ENCODE measurements at regions of chr12 and their contacts with region 1.

Region 1: DNA sequence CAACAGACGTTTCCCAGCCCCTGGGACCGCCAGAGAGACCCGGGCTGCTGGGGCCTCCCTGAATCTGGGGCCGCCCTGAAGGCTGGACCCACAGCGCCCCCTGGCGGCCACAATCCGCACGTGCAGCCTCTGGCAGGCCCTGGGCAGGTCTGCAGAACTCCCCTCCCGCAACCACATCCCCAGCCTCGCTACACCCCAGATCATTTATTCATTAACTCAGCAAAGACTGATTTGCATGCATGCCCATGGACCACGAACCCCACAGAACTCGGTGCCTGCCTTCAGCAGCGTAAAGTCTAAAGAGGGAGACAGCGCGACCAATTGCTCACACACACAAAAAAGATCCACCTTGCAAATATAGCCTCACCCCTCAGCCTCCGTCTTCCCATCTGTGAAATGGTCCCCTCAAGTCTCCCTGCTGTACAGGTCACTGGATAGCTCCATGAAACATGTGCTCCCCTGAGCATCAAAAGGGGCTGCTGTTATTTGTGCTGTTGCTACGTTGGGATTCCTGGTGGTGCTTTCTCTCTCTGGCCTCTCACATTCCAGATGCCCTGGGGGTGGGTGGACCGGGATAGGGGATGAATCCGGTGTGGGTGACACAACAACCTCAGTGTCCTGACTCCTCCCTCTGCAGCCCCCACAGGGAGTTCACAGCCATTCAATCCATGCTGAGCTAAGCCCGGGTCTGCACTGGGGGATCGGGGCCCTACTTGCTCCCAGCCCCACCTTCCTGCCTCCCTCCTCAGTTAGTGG is 96.4 kb downstream of the SCARB1 start:
- DNase-seq: peak; percentile 75 to 93 (median 88)
- ATAC-seq: peak; percentile 92
- H3K4me3 ChIP-seq: no peak overlapping the region
- H3K27ac ChIP-seq: no peak overlapping the region
- H3K4me1 ChIP-seq: peaks cover 0 to 12% of the 10 kb centered on the region in 2 experiments; a peak in 2 of 5 replicates
- H3K27me3 ChIP-seq: peaks cover 0 to 15% of the 10 kb centered on the region in 2 experiments; a peak in 2 of 5 replicates
- CTCF ChIP-seq: peak; percentile 88 to 94 (median 91)
- EP300 ChIP-seq: no peak
- POLR2A ChIP-seq: no peak
- RAD21 ChIP-seq: peak; percentile 81 to 96

Region 2: GRCh38 chr12:124044809-124045321 is 722.4 kb before region 1 on chr12:
- CTCF ChIA-PET with region 1: no interaction called
- POLR2A ChIA-PET with region 1: interaction called, 3 read pairs
- in situ Hi-C with region 1: loop called (anchors 5 kb)
- intact Hi-C with region 1: no loop called
- DNase-seq: no peak
- ATAC-seq: no peak
- H3K4me3 ChIP-seq: no peak overlapping the region
- H3K27ac ChIP-seq: no peak overlapping the region
- H3K4me1 ChIP-seq: no peaks in the 10 kb centered on the region
- H3K27me3 ChIP-seq: peaks cover 28 to 44% of the 10 kb centered on the region in 2 experiments
- CTCF ChIP-seq: no peak
- EP300 ChIP-seq: no peak
- POLR2A ChIP-seq: no peak
- RAD21 ChIP-seq: no peak

Region 3: DNA sequence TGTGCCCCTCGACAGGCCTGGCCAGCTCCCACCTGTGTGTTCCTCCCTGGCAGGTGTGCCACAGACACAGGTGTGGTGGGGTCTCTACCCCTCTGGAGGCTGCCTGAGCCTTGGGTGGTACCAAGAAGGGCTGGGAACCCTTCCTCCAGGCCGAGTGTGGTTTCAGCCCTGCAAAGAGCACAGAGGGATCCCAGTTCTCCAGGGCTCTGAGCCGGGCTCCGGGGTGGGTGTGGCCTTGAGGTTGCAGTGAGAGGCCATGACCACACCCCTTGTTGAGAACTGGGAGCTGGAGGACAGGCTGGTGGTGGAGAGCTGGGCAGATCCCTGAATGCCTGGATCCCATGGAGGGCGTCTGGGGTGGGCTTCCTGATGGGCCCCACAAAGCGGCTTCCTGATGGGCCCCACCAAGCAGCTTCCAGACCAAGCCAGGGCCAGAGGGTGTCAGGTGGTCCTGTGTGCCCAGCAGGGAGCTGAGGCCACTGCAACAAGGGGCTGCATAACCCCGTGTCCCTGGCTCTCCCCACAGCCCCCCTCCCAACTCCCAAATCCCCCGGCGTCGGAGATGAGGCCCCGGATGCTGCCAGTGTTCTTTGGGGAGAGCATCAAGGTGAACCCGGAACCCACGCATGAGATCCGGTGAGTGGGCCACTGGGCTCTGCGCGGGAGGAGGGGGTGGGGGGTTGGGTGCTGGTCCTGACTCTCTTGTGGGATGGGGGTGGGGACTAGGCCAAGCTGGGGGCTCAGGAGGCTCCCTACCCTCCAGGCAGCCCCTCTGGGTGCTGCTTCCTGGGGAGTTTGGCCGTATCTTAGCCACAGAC is 455.7 kb before region 1 on chr12:
- CTCF ChIA-PET with region 1: no interaction called
- POLR2A ChIA-PET with region 1: no interaction called
- in situ Hi-C with region 1: no loop called
- intact Hi-C with region 1: loop called (anchors 10 kb)
- DNase-seq: peak; percentile 37 to 57 (median 57)
- ATAC-seq: peak; percentile 79
- H3K4me3 ChIP-seq: no peak overlapping the region
- H3K27ac ChIP-seq: no peak overlapping the region
- H3K4me1 ChIP-seq: peaks cover 0 to 27% of the 10 kb centered on the region in 2 experiments; a peak in 2 of 5 replicates
- H3K27me3 ChIP-seq: peaks cover 47 to 84% of the 10 kb centered on the region in 2 experiments
- CTCF ChIP-seq: no peak
- EP300 ChIP-seq: no peak
- POLR2A ChIP-seq: no peak
- RAD21 ChIP-seq: no peak

Region 4: GRCh38 chr12:124332068-124332672 is 435.1 kb before region 1 on chr12:
- CTCF ChIA-PET with region 1: interaction called, 5 read pairs
- POLR2A ChIA-PET with region 1: no interaction called
- in situ Hi-C with region 1: loop called (anchors 10 kb)
- intact Hi-C with region 1: no loop called
- DNase-seq: peak; percentile 20 to 56 (median 46)
- ATAC-seq: peak; percentile 76
- H3K4me3 ChIP-seq: no peak overlapping the region
- H3K27ac ChIP-seq: no peak overlapping the region
- H3K4me1 ChIP-seq: peaks cover 0 to 17% of the 10 kb centered on the region in 2 experiments; a peak in 2 of 5 replicates
- H3K27me3 ChIP-seq: no peaks in the 10 kb centered on the region
- CTCF ChIP-seq: peak; percentile 8 to 35 (median 32); a peak in 2 of 6 replicates
- EP300 ChIP-seq: no peak
- POLR2A ChIP-seq: no peak
- RAD21 ChIP-seq: peak in 1 of 2 experiments; percentile 46; a peak in 2 of 4 replicates

Region 5: DNA sequence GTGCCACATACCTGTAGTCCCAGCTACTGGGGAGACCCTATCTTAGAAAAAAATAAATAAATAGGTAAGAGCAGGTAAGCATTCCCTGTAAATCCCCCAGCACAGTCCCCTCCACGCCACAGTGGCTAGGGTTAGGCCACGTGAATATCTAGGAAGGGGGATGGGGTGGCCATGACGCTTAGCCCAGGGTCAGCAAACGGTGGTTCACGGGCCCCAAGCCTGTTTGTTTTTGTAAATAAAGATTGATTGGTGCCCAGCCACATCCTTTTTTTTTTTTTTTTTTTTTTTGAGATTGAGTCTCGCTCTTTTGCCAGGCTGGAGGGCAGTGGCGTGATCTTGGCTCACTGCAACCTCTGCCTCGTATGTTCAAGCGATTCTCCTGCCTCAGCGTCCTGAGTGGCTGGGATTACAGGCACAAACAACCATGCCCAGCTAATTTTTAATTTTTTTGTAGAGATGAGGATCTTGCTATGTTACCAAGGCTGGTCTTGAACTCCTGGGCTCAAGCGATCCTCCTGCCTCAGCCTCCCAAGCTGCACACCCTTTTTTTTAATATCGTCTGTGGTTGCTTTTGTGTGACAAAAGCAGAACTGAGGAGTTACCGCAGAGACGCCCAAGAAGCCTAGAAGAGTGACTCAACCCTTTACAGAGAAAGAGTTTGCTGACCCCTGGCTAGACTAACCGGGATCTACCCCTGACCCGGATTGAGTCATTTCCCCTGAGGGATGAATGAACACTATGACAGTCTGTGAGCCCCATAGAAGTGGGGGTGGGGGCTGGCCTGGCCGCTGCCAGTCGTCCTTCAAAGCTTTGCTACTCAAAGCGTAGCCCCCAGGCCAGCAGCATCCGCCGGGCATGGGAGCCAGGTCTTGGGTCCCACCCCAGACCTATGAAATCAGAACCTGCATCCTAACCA is 86.1 kb before region 1 on chr12:
- CTCF ChIA-PET with region 1: no interaction called
- POLR2A ChIA-PET with region 1: no interaction called
- in situ Hi-C with region 1: no loop called
- intact Hi-C with region 1: loop called (anchors 5 kb)
- DNase-seq: peak; percentile 63 to 79 (median 70)
- ATAC-seq: peak; percentile 94
- H3K4me3 ChIP-seq: no peak overlapping the region
- H3K27ac ChIP-seq: no peak overlapping the region
- H3K4me1 ChIP-seq: peaks cover 20 to 48% of the 10 kb centered on the region in 2 experiments
- H3K27me3 ChIP-seq: peaks cover 0 to 19% of the 10 kb centered on the region in 2 experiments; a peak in 1 of 5 replicates
- CTCF ChIP-seq: peak; percentile 69 to 78 (median 71)
- EP300 ChIP-seq: 0 out of 2 replicates have a peak, but pooled peaks have one; percentile 11
- POLR2A ChIP-seq: no peak
- RAD21 ChIP-seq: peak; percentile 83 to 88

Region 6: GRCh38 chr12:125183187-125184067 is 416.2 kb after region 1 on chr12:
- CTCF ChIA-PET with region 1: no interaction called
- POLR2A ChIA-PET with region 1: no interaction called
- in situ Hi-C with region 1: no loop called
- intact Hi-C with region 1: no loop called
- DNase-seq: peak; percentile 85 to 92 (median 90)
- ATAC-seq: peak; percentile 85
- H3K4me3 ChIP-seq: no peak overlapping the region
- H3K27ac ChIP-seq: no peak overlapping the region
- H3K4me1 ChIP-seq: peaks cover 0 to 24% of the 10 kb centered on the region in 2 experiments; a peak in 3 of 5 replicates
- H3K27me3 ChIP-seq: peaks cover 11 to 41% of the 10 kb centered on the region in 2 experiments; a peak in 4 of 5 replicates
- CTCF ChIP-seq: peak; percentile 95 to 97 (median 96)
- EP300 ChIP-seq: no peak
- POLR2A ChIP-seq: no peak
- RAD21 ChIP-seq: peak; percentile 79 to 95